Ascending aorta (tissue), 2 donors: ENCODE measurements at regions of chr2 and their contacts with region 1.

Region 1: GRCh38 chr2:71831193-71831577 is 316.5 kb downstream of the CYP26B1 start:
- DNase-seq: peak; percentile 71 to 92
- H3K4me3 ChIP-seq: no peak overlapping the region
- H3K27ac ChIP-seq: peak overlapping the region; percentile 85
- H3K4me1 ChIP-seq: peaks cover 4 to 22% of the 10 kb centered on the region in 2 donors
- H3K27me3 ChIP-seq: no peaks in the 10 kb centered on the region
- CTCF ChIP-seq: no peak

Region 2: GRCh38 chr2:71843391-71843850 is 12.2 kb after region 1 on chr2:
- intact Hi-C with region 1: loop called (anchors 1 kb)
- DNase-seq: no peak
- H3K4me3 ChIP-seq: no peak overlapping the region
- H3K27ac ChIP-seq: peak overlapping the region; percentile 25 to 42
- H3K4me1 ChIP-seq: peaks cover 0 to 12% of the 10 kb centered on the region in 2 donors
- H3K27me3 ChIP-seq: no peaks in the 10 kb centered on the region
- CTCF ChIP-seq: no peak

Region 3: GRCh38 chr2:71882949-71883472 is 51.8 kb after region 1 on chr2:
- intact Hi-C with region 1: loop called (anchors 1 kb)
- DNase-seq: peak in 1 of 2 donors; percentile 84
- H3K4me3 ChIP-seq: no peak overlapping the region
- H3K27ac ChIP-seq: no peak overlapping the region
- H3K4me1 ChIP-seq: peaks cover 21 to 40% of the 10 kb centered on the region in 2 donors
- H3K27me3 ChIP-seq: no peaks in the 10 kb centered on the region
- CTCF ChIP-seq: no peak

Region 4: GRCh38 chr2:72144632-72145288 is 313.6 kb after region 1 on chr2:
- intact Hi-C with region 1: loop called (anchors 2 kb)
- DNase-seq: peak in 1 of 2 donors; percentile 69
- H3K4me3 ChIP-seq: peak overlapping the region; percentile 52 to 72
- H3K27ac ChIP-seq: peak overlapping the region; percentile 85 to 87
- H3K4me1 ChIP-seq: peaks cover 20 to 55% of the 10 kb centered on the region in 2 donors
- H3K27me3 ChIP-seq: no peaks in the 10 kb centered on the region
- CTCF ChIP-seq: no peak